Activated CD4-positive, alpha-beta T cell treated with anti-CD3 and anti-CD28 coated beads, Interleukin-2, amount 10 ng/mL, durations not matched to agents 24 days and 14 days (primary cell): ENCODE measurements at regions of chr2 and their contacts with region 1.

Region 1: DNA sequence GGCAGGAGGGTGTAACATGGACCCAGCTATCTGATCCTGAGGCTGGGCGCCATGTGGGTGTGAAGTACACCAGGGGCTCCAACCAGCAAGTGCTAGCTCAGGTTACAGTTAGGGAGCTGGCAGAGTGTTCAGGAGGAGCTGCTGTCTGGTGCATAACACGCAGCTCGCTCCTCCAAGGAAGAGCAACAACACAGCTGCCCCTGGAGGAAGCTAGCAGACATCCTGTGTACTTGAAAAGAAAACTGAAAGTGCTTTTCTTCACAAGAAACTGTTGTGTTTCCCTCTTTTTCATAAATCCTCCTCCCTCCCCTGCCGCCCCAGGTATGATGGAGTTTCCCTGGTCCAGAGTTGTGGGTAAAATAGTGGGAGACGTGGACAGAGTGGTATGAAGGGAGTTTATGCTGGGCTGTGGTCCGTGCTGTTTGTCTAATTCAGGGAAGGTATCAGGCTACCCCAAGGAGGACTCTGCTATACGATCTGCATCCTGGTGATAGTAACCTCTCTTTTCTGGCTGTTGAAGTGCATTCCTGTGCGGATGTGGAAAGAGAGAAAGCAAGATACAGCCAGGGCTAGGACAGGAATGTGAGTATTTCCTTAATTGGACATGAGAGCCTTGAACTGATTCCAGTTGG is 6.1 kb upstream of the LBH start:
- DNase-seq: peak; percentile 88
- H3K4me3 Mint-ChIP-seq: peak overlapping the region; percentile 89
- H3K27ac Mint-ChIP-seq: peak overlapping the region; percentile 98
- H3K4me1 Mint-ChIP-seq: peaks cover 63% of the 10 kb centered on the region
- H3K27me3 Mint-ChIP-seq: no peaks in the 10 kb centered on the region

Region 2: DNA sequence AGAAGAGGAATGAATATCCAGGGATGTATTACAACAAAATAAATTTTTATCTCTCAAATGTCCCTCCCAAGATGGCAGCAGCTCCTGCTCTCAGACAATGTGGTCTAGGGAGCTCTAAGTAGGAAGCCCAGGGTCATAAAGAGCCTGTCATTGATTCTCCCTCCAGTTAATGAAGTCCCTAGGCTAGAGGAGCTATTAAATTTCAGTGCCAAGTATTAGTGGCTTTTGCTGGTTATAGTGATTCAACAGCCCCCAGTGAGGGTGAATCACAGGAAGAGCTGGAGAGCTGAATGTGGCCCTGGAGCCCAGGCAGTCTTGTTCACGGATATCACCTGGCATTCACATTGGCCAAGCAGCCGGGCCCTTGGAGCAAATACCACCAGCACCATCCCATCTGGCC is 188.2 kb before region 1 on chr2:
- intact Hi-C with region 1: no loop called
- DNase-seq: no peak
- H3K4me3 Mint-ChIP-seq: no peak overlapping the region
- H3K27ac Mint-ChIP-seq: no peak overlapping the region
- H3K4me1 Mint-ChIP-seq: no peaks in the 10 kb centered on the region
- H3K27me3 Mint-ChIP-seq: peaks cover 12% of the 10 kb centered on the region

Region 3: DNA sequence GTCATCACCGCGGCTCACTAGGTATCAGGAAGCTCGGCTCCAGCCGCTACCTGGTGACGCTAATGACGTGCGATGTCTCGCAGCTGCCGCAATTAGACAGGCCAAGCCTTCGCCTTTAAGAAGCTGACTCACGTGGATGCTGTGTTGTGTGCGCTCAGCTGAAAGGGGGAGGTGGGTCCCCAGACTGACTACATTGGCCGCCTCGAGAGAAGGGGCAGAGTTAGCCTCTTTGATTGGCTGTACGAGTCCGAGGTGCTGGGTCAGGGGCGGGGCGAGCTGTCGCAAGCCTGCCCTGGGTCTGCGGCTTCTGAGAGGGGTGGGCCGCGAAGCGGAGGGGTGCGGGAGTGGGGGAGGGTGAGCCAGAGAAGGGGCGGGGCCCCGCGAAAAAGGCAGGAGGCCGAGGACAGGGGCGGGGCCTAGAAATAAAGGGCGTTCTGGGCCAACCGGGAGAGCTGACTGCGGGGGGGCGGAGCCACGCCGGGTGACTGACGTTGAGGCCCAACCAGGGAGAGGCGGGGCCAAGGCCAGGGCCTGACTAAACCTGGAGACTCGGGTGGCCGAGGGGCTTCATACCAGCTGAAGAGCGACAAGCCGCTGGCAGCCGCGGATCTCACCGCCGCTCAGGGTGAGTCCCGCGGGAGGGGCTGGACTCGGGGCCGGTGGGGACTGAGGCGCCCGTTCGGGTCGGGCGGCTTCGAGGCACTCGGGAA is 78.7 kb before region 1 on chr2 and contains the start of gene YPEL5:
- intact Hi-C with region 1: loop called (anchors 1 kb)
- DNase-seq: peak; percentile 100
- H3K4me3 Mint-ChIP-seq: peak within 1 kb of the TSS; percentile 87
- H3K27ac Mint-ChIP-seq: peak within 1 kb of the TSS; percentile 97
- H3K4me1 Mint-ChIP-seq: peaks cover 32% of the 10 kb centered on the region
- H3K27me3 Mint-ChIP-seq: no peaks in the 10 kb centered on the region
- total RNA-seq, gene YPEL5: 16.8 and 19.6 TPM in 2 replicates

Region 4: DNA sequence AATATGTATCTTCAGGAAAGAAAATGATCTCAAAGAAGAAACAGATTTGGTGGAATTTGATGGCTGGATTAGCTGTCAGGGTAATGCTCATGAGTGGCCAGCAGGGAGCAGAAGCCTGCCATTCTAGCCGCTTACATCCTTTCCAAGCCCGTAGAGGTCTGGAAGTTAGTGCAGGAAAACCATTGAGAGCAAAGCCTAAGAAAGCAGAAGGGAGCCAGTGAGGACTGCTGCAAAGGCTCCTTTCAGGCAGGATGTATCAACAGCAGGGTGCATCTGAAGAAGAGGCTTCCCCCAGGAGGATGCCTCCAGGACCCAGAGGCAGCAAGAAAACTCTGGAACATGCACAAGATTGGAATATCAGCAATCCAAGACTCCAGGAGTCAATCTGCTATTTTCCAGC is 16.8 kb before region 1 on chr2:
- intact Hi-C with region 1: loop called (anchors 1 kb)
- DNase-seq: peak; percentile 75
- H3K4me3 Mint-ChIP-seq: no peak overlapping the region
- H3K27ac Mint-ChIP-seq: no peak overlapping the region
- H3K4me1 Mint-ChIP-seq: peaks cover 13% of the 10 kb centered on the region
- H3K27me3 Mint-ChIP-seq: peaks cover 9% of the 10 kb centered on the region

Region 5: GRCh38 chr2:30266051-30266621 is 40.9 kb after region 1 on chr2:
- intact Hi-C with region 1: loop called (anchors 1 kb)
- DNase-seq: peak; percentile 86
- H3K4me3 Mint-ChIP-seq: peak overlapping the region; percentile 90
- H3K27ac Mint-ChIP-seq: peak overlapping the region; percentile 99
- H3K4me1 Mint-ChIP-seq: peaks cover 70% of the 10 kb centered on the region
- H3K27me3 Mint-ChIP-seq: no peaks in the 10 kb centered on the region

Region 6: DNA sequence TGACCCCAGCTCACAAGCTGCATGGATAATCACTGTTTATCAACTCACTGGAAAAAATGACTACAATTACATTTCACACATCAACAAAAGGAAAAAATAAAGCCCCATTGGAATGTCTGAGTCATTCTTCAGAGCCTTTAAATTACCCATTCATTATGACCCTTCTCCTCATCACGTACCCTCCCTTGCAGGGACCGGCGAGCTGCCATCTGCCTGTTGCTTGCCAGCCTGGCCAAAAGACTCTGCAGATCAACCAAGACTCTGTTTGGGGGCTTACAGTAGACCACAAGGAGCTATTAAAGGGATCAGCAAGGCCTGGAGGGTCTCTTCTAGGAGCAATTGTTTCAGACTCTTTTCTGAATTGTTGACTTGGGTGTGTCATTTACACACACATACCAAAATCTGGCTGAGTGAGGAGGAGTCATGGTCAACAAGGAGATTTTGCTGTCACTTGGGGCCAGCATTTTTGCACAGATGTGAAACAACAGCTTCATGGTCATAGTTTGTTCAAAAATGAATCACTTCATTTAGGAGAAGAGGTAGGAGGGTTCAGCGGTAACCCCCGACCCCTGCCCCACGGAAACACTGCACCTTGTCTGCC is 48.1 kb after region 1 on chr2:
- intact Hi-C with region 1: loop called (anchors 1 kb)
- DNase-seq: no peak
- H3K4me3 Mint-ChIP-seq: peak overlapping the region; percentile 71
- H3K27ac Mint-ChIP-seq: peak overlapping the region; percentile 99
- H3K4me1 Mint-ChIP-seq: peaks cover 72% of the 10 kb centered on the region
- H3K27me3 Mint-ChIP-seq: no peaks in the 10 kb centered on the region

Region 7: DNA sequence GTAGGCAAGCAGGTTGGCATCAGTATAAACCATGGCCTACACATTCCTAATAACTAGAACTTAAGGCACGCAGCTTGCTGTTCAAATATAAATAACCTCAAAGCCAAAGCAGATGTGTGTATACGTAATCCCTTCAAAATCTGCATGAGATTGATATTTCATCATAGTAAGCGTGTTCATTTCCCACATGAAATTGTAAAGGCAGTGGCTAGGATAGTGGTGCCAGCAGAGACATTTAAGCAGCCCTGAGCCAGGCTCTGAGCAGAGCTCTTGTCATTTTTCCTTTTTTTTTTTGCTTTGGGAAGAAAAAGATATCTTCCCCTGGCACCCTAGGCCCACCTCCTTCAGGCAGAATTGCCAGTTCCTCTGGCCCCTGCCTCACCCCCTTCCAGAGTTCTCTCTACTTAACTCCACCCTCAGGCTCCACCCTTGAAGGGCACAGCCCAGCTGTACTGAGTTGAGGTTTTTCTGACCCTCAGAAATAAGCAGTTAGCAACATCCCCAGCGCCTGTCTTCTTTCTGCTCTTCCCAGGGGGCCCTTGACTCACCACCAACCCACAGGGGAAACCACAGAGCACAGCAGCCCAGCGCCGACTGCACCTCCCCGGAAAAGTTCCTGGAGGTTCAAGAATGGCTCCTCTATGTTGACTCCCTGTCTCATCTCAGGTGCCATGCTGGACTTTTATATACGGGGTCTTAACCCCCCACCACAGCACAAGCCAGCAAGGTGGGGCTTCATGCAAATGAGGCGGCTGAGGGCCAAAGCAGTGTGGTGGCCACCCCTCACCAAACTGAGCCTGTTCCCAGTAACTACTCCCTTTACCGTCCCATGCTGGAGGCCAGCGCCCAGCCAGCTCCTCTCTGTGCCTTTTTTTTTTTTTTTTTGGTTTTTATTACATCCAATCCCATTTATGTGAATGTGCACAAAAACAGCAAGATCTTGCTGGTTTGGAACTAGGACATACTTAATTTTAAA is 1093.4 kb after region 1 on chr2:
- intact Hi-C with region 1: loop called (anchors 5 kb)
- DNase-seq: peak; percentile 85
- H3K4me3 Mint-ChIP-seq: peak overlapping the region; percentile 64
- H3K27ac Mint-ChIP-seq: peak overlapping the region; percentile 67
- H3K4me1 Mint-ChIP-seq: peaks cover 52% of the 10 kb centered on the region
- H3K27me3 Mint-ChIP-seq: peaks cover 2% of the 10 kb centered on the region